ENCODE measurements at regions of chr15 and their contacts with region 1.

Region 1: GRCh38 chr15:66946578-66947164 is 118.7 kb upstream of the SMAD3 start:
- DNase-seq: peak; percentile 68 to 87
- ATAC-seq: peak; percentile 69
- H3K4me3 ChIP-seq: no peak overlapping the region
- H3K27ac ChIP-seq: no peak overlapping the region
- H3K4me1 ChIP-seq: no peaks in the 10 kb centered on the region
- H3K27me3 ChIP-seq: no peaks in the 10 kb centered on the region

Region 2: DNA sequence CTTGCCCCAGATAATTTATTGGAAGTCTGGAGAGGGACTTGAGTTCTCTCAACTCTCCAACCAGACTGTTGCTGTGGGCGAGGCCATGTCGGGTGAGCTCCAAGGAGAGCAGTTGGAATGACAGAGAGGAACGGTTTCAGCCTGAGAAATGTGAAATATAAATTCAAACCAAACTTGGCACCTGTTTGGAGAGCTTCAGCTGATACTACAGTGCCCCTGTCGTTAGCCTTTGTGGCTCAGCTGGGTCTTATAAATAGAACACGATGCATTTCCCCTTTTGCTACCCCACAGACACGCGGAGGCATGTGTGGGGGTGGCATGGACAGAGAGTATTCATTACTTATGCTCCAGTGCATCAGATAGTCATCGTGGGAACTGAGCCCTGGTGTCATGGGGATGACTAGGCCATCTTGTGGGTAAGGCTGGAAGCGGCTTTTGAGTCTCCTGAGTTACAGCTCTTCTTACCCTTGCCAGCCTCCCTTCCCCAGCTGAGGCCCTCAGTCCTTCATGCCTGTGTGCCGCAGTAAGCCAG is 134.3 kb after region 1 on chr15:
- intact Hi-C with region 1: no loop called
- DNase-seq: peak; percentile 74 to 79
- ATAC-seq: peak; percentile 67
- H3K4me3 ChIP-seq: no peak overlapping the region
- H3K27ac ChIP-seq: peak overlapping the region in 1 of 2 donors; percentile 90
- H3K4me1 ChIP-seq: peaks cover 4 to 14% of the 10 kb centered on the region in 2 donors
- H3K27me3 ChIP-seq: no peaks in the 10 kb centered on the region

Region 3: GRCh38 chr15:67303490-67304363 is 357.1 kb after region 1 on chr15:
- intact Hi-C with region 1: loop called (anchors 2 kb)
- DNase-seq: no peak
- ATAC-seq: no peak
- H3K4me3 ChIP-seq: no peak overlapping the region
- H3K27ac ChIP-seq: no peak overlapping the region
- H3K4me1 ChIP-seq: no peaks in the 10 kb centered on the region
- H3K27me3 ChIP-seq: no peaks in the 10 kb centered on the region

Region 4: DNA sequence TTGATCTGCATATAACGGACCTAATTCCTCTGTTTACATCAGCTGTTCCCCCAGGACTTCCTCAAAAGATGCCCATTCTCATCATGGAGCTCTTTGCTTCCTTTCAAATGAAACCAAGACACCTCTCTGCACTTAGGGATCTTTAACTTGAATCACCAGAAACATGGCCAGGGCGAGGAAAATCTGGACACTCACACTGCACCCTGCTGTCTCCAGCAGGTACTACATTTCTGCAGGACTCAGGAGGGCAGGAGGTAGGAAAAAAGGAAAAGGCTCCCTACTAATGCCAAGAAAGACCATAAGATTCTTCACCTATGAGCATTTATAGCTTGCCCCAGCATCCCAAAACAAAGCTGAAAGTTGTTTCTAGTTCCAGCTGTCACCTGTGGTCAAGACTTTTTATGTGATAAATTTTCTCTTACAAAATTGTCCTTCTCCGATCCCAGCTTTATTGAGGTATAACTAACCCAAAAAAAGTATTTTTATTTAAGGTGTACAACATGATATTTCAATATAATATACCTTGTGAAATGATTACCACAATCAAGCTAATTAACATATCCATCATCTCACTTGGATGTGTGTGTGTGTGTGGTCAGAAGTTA is 486.9 kb after region 1 on chr15:
- intact Hi-C with region 1: loop called (anchors 2 to 5 kb)
- DNase-seq: peak in 1 of 2 donors; percentile 54
- ATAC-seq: peak; percentile 75
- H3K4me3 ChIP-seq: no peak overlapping the region
- H3K27ac ChIP-seq: no peak overlapping the region
- H3K4me1 ChIP-seq: no peaks in the 10 kb centered on the region
- H3K27me3 ChIP-seq: no peaks in the 10 kb centered on the region

Measured in aorta (tissue), 5 donors.